GM18951 (cell line): ENCODE measurements at regions of chrX and their contacts with region 1.

Region 1: DNA sequence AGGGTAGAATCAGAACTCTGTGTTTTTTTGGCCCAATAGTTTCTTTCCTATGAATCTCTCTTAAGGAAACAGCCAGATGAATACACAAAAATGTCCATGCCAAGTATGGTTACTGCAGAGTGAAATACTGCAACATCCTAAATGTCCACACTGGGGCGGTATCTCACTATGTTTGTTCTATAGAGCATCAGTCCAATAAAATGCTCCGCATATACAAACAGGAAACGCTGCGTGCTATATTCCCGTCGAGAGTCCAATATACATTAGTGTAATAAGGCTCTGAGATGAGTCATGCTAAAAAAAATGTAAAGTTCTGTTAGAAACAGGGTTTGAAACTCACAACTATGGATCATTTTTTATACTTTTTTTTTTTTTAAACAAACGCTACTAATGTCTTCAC is 72.9 kb upstream of the ENOX2 start:
- POLR2A ChIP-seq: no peak

Region 2: DNA sequence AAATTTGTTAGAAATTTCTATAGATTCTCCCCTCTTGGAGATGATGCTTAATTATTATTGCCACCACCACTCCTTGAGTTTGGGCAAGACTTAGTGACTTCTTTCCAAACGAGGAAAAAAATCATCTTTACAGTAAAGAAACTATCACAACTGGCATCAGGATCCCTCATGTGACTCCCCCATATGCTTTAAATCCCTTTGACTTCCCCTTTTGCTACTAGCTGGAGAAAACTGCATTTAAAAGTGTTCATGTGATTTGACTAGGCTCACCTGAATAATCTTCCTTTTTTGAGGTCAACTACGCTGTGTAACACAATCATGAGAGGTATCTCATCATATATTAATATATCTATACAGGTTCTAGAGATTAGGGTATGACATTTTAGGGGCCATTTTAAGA is 42.6 kb before region 1 on chrX:
- in situ Hi-C with region 1: no loop called
- POLR2A ChIP-seq: no peak

Region 3: GRCh38 chrX:131633285-131633917 is 657.5 kb after region 1 on chrX:
- in situ Hi-C with region 1: loop called (anchors 25 kb)
- POLR2A ChIP-seq: no peak